ENCODE measurements at regions of chr6 and their contacts with region 1.

Region 1: DNA sequence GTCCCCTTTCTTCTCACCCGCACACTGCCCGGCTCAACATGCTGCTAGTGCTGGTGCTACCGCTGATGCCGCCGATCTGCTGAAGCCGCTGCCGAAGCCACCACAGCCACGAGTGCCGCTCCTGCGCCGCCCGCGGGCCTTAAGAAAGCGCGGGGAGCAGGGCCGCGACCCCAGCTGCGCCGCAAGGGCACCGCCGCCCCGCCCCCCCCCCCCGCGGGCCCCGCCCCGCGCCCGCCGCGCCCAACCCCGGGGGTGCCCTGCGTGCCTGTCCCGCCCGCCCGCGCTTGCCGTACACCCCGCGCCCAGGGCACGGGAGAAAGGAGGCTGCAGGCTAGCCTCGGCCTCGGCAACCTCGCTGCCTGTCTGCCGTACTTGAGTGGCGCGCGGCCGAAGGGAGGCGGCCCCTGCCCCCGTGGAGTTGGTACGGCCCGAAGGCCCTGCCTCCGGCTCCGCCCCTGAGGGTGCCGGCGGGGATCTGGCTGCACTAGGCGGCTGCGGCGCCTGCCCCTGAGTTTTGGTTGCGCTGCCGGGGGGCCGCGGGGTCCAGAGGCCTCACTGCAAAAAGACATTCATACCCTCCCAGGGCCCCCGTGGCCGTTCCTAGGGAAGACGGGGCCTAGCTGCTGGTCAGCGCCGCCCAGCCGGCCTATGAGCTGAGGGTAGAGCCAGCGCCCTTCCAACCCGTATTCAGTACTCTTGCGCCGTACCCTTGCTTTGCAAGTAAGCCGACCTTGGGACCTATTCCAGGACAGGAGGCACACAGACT is at the start of gene SOD2:
- DNase-seq: peak in 1 of 2 donors; percentile 94
- H3K4me3 ChIP-seq: peak within 1 kb of the TSS; percentile 89 to 97
- H3K27ac ChIP-seq: peak within 1 kb of the TSS; percentile 99
- H3K4me1 ChIP-seq: peaks cover 43% of the 10 kb centered on the region
- H3K27me3 ChIP-seq: no peaks in the 10 kb centered on the region
- CTCF ChIP-seq: peak in 1 of 3 experiments; percentile 8
- POLR2A ChIP-seq: peak; percentile 31 to 92
- total RNA-seq, gene SOD2: 597 TPM

Region 2: DNA sequence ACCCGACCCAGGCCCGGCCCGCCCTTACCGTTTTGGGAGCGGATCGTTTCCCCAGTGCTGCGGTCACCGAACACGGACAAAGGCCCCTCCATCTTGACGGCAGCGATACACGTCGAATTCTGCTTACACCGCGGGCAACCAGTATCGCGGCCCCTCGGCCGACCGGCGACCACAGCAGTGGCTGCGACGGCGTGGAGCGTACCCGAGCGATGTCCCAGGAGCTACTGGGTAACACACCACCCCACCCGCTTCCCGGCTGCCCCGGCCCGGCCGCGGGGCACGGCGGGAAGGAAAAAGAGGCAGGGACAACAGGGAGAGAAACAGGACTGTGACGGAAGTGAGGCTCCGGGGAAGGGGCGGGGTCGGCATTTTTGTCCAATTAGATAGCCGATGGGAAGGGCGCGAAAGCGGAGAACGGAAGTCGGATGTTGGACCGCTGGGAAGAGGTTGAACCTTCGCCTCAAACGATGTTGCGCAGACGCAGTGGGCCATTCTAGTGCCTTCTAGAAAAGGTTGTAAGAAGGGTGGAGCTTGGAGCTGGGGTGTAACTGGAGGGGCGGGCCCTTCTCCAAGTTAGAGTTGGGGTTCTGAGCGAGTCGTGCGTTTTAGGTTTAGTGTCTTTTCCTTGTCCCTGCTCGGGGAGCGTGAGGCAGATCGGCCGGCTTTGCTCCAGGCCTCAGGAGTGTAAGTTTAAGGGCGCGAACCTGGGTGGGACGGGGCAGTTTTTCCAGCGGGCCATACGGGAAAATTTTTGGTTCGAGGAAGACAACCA is 96.3 kb after region 1 on chr6 and contains the start of gene TCP1:
- intact Hi-C with region 1: loop called (anchors 5 kb)
- DNase-seq: peak; percentile 99 to 100
- H3K4me3 ChIP-seq: peak within 1 kb of the TSS; percentile 87 to 92
- H3K27ac ChIP-seq: peak within 1 kb of the TSS; percentile 100
- H3K4me1 ChIP-seq: peaks cover 73% of the 10 kb centered on the region
- H3K27me3 ChIP-seq: no peaks in the 10 kb centered on the region
- CTCF ChIP-seq: no peak
- POLR2A ChIP-seq: peak in 1 of 2 donors; percentile 98
- total RNA-seq, gene TCP1: 80.8 TPM

Region 3: GRCh38 chr6:159968440-159969203 is 275.3 kb after region 1 on chr6 and contains the start of gene IGF2R:
- intact Hi-C with region 1: loop called (anchors 10 kb)
- DNase-seq: no peak
- H3K4me3 ChIP-seq: peak within 1 kb of the TSS; percentile 70 to 94
- H3K27ac ChIP-seq: peak within 1 kb of the TSS; percentile 93
- H3K4me1 ChIP-seq: peaks cover 43% of the 10 kb centered on the region
- H3K27me3 ChIP-seq: no peaks in the 10 kb centered on the region
- CTCF ChIP-seq: no peak
- POLR2A ChIP-seq: peak in 1 of 2 donors; percentile 74
- total RNA-seq, gene IGF2R: 73.4 TPM